Mammary epithelial cell (primary cell): ENCODE measurements at regions of chr6 and their contacts with region 1.

Region 1: GRCh38 chr6:121436960-121437850 is 1.8 kb downstream of the GJA1 start:
- DNase-seq: peak; percentile 39
- H3K4me3 ChIP-seq: peak overlapping the region; percentile 73 to 98 (median 90)
- H3K27ac ChIP-seq: peak overlapping the region; percentile 96
- H3K4me1 ChIP-seq: peaks cover 21% of the 10 kb centered on the region
- H3K27me3 ChIP-seq: no peaks in the 10 kb centered on the region
- CTCF ChIP-seq: no peak

Region 2: DNA sequence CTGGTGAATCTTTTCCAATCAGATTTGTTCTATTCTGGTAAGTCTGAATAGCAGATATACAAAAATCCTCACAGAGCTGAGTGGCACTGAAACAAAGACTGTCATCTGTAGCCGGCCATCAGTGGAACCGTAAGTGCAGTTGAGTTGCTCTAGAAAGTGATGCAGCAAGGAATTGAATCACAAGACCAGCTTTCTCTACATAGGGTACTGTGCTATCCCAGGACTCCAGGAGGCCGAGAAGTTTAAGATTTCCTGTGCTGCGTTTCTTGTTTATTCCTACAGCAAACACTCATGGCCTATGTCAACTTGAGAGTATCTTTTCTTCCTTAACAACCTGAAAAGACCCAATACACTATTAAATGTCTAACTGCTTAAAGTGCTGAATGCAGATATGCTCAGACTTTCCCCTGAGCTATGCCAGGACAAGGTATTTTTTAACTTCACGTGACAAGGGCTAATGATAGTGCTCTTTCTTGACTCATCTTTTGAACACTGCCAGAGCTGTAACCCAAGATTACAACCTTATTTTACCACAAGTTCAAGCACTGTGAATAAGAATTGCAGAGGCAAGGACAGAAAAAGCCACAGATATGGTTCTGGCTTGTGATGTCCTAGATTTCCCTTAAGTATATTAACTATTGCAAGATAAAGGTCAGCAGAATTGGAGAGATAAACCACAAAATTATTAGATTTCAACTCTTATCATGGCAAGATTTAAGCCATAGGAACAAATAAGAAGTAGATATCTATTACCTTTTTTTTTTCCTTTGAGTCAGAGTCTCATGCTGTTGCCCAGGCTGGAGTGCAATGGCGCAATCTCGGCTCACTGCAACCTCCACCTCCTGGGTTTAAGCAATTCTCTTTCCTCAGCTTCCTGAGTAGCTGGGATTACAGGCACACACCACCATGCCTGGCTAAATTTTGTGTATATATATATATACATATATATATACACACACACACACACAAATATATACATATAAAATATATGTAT is 69.9 kb after region 1 on chr6:
- CTCF ChIA-PET with region 1: no interaction called
- dilution Hi-C with region 1: no loop called
- in situ Hi-C with region 1: no loop called
- intact Hi-C with region 1: loop called (anchors 2 kb)
- DNase-seq: peak; percentile 68
- H3K4me3 ChIP-seq: no peak overlapping the region
- H3K27ac ChIP-seq: no peak overlapping the region
- H3K4me1 ChIP-seq: peaks cover 14% of the 10 kb centered on the region
- H3K27me3 ChIP-seq: no peaks in the 10 kb centered on the region
- CTCF ChIP-seq: no peak

Region 3: DNA sequence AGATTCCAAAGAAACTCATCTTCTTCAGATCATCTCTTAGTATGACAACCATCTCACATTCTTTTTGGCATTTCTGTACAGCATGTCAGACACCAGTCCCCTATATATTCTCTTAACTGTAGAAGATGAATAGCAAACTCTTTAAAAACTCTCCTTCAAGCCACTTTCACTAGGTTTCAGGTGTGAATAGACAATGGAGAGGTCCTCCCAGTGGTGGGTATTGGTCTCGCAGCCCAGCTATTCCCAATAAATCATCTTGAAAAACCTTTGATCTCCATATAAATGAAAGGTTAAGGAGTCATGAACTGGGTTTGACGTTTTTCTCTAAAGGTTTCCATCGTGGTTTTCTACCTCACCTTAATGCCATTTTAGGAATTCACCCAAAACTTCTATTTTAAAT is 178.3 kb after region 1 on chr6:
- CTCF ChIA-PET with region 1: interaction called, 4 read pairs
- dilution Hi-C with region 1: no loop called
- in situ Hi-C with region 1: no loop called
- intact Hi-C with region 1: loop called (anchors 2 kb)
- DNase-seq: no peak
- H3K4me3 ChIP-seq: no peak overlapping the region
- H3K27ac ChIP-seq: no peak overlapping the region
- H3K4me1 ChIP-seq: no peaks in the 10 kb centered on the region
- H3K27me3 ChIP-seq: no peaks in the 10 kb centered on the region
- CTCF ChIP-seq: peak; percentile 34 to 35

Region 4: GRCh38 chr6:121694389-121695251 is 257.4 kb after region 1 on chr6:
- CTCF ChIA-PET with region 1: no interaction called
- dilution Hi-C with region 1: no loop called
- in situ Hi-C with region 1: no loop called
- intact Hi-C with region 1: loop called (anchors 5 kb)
- DNase-seq: no peak
- H3K4me3 ChIP-seq: no peak overlapping the region
- H3K27ac ChIP-seq: no peak overlapping the region
- H3K4me1 ChIP-seq: peaks cover 12% of the 10 kb centered on the region
- H3K27me3 ChIP-seq: no peaks in the 10 kb centered on the region
- CTCF ChIP-seq: no peak

Region 5: GRCh38 chr6:121849477-121849876 is 412.3 kb after region 1 on chr6:
- CTCF ChIA-PET with region 1: interaction called, 7 read pairs
- dilution Hi-C with region 1: no loop called
- in situ Hi-C with region 1: loop called in 1 of 2 experiments (anchors 5 kb)
- intact Hi-C with region 1: loop called (anchors 1 kb)
- DNase-seq: peak; percentile 48
- H3K4me3 ChIP-seq: no peak overlapping the region
- H3K27ac ChIP-seq: no peak overlapping the region
- H3K4me1 ChIP-seq: no peaks in the 10 kb centered on the region
- H3K27me3 ChIP-seq: no peaks in the 10 kb centered on the region
- CTCF ChIP-seq: peak; percentile 89 to 90